Caco-2 (cell line): ENCODE measurements at regions of chr10 and their contacts with region 1.

Region 1: DNA sequence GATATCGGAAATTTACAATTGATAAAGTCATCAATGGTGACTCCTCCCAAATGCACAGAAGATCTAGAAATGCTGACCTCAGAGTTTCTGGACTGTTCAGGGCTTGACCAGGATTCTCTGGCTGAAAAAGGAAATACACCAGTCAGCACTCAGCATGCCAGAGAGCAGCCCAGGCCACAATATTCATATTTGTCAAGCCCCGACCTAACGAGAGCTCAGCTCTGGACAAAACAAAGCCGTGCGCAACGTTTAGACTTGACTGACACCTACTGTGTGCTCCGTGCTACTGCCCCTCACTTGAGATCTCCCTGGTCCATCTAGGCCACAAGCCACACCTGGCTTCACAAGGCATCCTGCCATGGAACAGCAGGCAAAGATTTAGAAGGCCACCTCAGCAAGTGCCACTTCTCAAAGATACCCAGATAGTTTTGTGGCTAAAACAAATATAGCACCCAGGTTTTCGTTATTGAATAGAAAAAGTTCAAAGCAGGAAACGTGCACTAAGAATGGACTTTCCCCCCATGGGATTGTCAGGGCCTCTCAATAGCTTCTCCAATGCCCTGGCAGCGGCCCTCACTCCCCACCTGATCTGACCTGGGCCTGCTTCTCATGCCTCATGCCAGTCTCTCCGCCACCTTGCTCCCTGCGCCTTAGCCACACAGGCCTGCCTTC is 218.3 kb downstream of the FAM107B start:
- DNase-seq: peak; percentile 76 to 79
- H3K4me3 ChIP-seq: no peak overlapping the region
- H3K4me3 Mint-ChIP-seq: peak overlapping the region; percentile 5
- H3K27ac Mint-ChIP-seq: peak overlapping the region; percentile 58
- H3K4me1 ChIP-seq: peaks cover 79% of the 10 kb centered on the region
- H3K4me1 Mint-ChIP-seq: peaks cover 75% of the 10 kb centered on the region
- H3K27me3 ChIP-seq: no peaks in the 10 kb centered on the region
- H3K27me3 Mint-ChIP-seq: no peaks in the 10 kb centered on the region
- CTCF ChIP-seq: peak; percentile 47 to 81

Region 2: GRCh38 chr10:14195433-14195832 is 361.0 kb before region 1 on chr10:
- CTCF ChIA-PET with region 1: interaction called, 6 read pairs
- POLR2A ChIA-PET with region 1: no interaction called
- intact Hi-C with region 1: loop called (anchors 5 kb)
- DNase-seq: no peak
- H3K4me3 ChIP-seq: no peak overlapping the region
- H3K4me3 Mint-ChIP-seq: no peak overlapping the region
- H3K27ac Mint-ChIP-seq: no peak overlapping the region
- H3K4me1 ChIP-seq: no peaks in the 10 kb centered on the region
- H3K4me1 Mint-ChIP-seq: peaks cover 9% of the 10 kb centered on the region
- H3K27me3 ChIP-seq: no peaks in the 10 kb centered on the region
- H3K27me3 Mint-ChIP-seq: no peaks in the 10 kb centered on the region
- CTCF ChIP-seq: no peak

Region 3: DNA sequence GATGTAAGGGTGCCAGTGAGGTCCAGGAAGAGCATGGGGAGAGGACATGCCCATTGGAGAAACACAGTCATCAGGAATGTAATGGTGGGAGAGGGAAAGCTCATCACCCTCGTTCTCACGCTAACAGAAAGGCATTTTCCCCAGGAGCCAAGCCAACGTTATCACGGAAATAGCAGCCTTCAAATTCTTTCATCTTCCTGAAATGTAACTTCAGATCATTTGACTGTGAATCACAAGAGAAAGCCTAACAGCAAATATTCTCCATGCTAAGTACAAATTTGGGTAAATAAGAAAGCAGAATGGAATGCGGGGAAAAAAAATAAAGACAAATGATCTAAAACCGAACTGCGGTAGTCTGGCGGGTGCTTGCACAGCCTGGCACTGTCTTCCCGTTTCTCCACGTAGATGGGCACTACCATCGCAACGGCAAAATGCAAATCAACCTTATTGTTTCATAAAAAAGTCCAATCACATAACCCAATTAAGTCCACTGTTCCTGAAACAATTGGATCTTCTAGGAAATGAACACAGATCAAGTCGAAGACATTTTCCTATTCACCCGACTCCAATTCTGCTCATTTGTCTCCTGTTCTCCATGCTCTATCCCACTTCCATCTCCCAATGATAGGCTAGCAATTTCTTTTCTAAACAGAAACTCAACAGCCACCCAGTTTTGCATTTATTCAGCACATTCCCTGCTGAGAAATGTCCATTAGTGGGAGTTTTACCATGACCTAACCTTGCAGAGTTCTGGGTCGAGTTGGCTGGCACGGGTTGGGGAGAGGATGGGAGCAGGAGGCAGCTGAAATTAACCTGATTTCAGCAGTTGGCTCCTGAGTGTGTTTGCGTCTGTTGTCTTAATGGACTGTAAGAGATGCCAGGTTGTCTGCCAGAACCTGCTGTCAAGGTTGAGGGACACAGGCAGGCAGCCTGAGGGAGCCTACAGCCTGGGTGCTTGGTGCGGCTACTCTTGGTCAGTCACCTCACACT is 151.1 kb before region 1 on chr10:
- CTCF ChIA-PET with region 1: no interaction called
- POLR2A ChIA-PET with region 1: no interaction called
- intact Hi-C with region 1: no loop called
- DNase-seq: no peak
- H3K4me3 ChIP-seq: no peak overlapping the region
- H3K4me3 Mint-ChIP-seq: no peak overlapping the region
- H3K27ac Mint-ChIP-seq: no peak overlapping the region
- H3K4me1 ChIP-seq: peaks cover 8% of the 10 kb centered on the region; the same call in 1 of the 2 replicates
- H3K4me1 Mint-ChIP-seq: peaks cover 11% of the 10 kb centered on the region
- H3K27me3 ChIP-seq: no peaks in the 10 kb centered on the region
- H3K27me3 Mint-ChIP-seq: peaks cover 2% of the 10 kb centered on the region
- CTCF ChIP-seq: no peak

Region 4: GRCh38 chr10:14499601-14499904 is 56.9 kb before region 1 on chr10:
- CTCF ChIA-PET with region 1: interaction called, 4 read pairs
- POLR2A ChIA-PET with region 1: no interaction called
- intact Hi-C with region 1: loop called (anchors 1 kb)
- DNase-seq: no peak
- H3K4me3 ChIP-seq: no peak overlapping the region
- H3K4me3 Mint-ChIP-seq: no peak overlapping the region
- H3K27ac Mint-ChIP-seq: no peak overlapping the region
- H3K4me1 ChIP-seq: no peaks in the 10 kb centered on the region; the same call in 1 of the 2 replicates
- H3K4me1 Mint-ChIP-seq: peaks cover 15% of the 10 kb centered on the region
- H3K27me3 ChIP-seq: no peaks in the 10 kb centered on the region
- H3K27me3 Mint-ChIP-seq: no peaks in the 10 kb centered on the region
- CTCF ChIP-seq: no peak

Region 5: DNA sequence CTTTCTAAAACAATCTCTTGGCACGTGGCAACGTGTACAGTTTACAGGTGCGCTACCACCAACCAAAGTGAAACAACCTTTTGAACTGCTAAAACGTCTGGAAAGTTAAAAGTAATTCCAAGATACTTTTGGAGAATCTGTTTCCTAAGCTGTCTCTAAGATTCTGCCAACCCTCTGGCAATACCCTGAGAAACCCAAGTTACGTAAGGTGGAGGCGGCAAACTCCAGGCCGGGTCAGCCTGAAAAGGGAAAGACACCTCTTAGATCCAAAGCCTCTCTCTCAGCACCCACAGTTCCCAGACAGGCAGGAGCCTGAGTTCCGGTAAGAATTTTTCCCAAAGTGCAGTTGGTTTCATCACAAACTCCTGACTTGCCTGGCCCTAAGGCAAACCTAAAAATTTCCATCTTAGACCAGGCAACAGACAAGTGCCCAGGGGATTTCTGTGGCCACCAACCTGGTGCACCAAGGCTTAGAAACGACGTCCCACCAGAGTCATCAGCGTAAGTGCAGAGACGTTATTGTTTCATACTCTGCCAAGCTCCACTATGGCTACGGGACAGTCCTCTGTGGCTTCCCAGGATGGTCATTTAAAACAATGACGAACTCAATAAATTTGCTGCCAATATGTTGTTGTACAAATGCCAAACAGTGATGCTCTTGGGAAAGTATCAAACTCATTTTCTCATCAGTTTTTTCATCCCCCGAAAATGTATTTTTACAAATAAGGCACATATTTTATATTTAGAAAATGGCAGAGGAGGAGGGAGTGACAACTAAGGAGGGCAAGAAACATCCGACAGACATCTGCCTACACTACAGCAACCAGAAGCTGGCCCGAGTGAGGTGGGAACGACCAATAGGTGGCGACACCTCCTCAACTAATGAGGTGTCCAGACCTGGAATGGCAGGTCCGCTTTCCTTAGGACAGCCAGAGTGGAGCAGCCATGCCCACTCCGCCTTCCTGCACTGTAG is 19.9 kb before region 1 on chr10:
- CTCF ChIA-PET with region 1: interaction called, 9 read pairs
- POLR2A ChIA-PET with region 1: interaction called, 3 read pairs
- intact Hi-C with region 1: loop called (anchors 1 kb)
- DNase-seq: peak; percentile 84 to 87
- H3K4me3 ChIP-seq: no peak overlapping the region
- H3K4me3 Mint-ChIP-seq: no peak overlapping the region
- H3K27ac Mint-ChIP-seq: no peak overlapping the region
- H3K4me1 ChIP-seq: peaks cover 55% of the 10 kb centered on the region
- H3K4me1 Mint-ChIP-seq: peaks cover 38% of the 10 kb centered on the region
- H3K27me3 ChIP-seq: no peaks in the 10 kb centered on the region
- H3K27me3 Mint-ChIP-seq: no peaks in the 10 kb centered on the region
- CTCF ChIP-seq: peak; percentile 70 to 73

Region 6: GRCh38 chr10:14543046-14543903 is 13.1 kb before region 1 on chr10:
- CTCF ChIA-PET with region 1: interaction called, 11 read pairs
- POLR2A ChIA-PET with region 1: interaction called, 4 read pairs
- intact Hi-C with region 1: loop called (anchors 1 kb)
- DNase-seq: no peak
- H3K4me3 ChIP-seq: no peak overlapping the region
- H3K4me3 Mint-ChIP-seq: no peak overlapping the region
- H3K27ac Mint-ChIP-seq: peak overlapping the region; percentile 59
- H3K4me1 ChIP-seq: peaks cover 42% of the 10 kb centered on the region
- H3K4me1 Mint-ChIP-seq: peaks cover 52% of the 10 kb centered on the region
- H3K27me3 ChIP-seq: no peaks in the 10 kb centered on the region
- H3K27me3 Mint-ChIP-seq: no peaks in the 10 kb centered on the region
- CTCF ChIP-seq: peak in 1 of 2 experiments; percentile 45

Region 7: DNA sequence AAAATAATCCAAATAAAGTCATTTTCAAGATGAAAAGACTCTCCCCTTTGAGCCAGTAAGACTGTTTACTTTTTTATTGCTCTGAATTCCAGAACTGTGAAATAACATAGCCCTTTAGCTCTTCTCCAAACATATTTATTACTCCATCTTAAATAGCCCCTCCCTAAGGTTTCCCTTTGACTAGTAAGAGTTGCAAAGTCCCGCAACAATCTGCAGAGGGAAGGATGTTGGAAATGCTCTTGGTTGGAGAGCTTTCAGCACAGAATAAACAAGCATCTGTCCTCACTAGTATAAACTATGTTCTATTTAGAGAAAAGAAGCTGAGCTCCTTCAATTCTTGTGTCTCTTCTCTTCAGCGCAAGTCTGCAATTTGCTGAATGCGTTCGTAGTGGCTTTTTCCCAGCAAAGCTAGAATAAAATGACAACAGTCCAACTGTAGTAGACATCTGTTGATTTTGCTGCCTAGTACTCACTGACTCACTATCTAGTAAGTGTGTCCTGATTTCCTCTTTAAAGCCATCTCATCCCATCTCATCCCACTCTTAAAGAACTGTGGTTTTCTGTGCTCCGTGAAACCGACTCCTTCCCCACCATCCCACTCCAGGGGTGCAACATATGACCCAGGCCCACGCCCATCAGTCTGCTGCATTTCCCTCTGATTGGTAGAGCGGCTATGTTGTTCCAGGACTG is 114.3 kb after region 1 on chr10:
- CTCF ChIA-PET with region 1: no interaction called
- POLR2A ChIA-PET with region 1: no interaction called
- intact Hi-C with region 1: loop called (anchors 5 kb)
- DNase-seq: peak in 1 of 2 experiments; percentile 60
- H3K4me3 ChIP-seq: no peak overlapping the region
- H3K4me3 Mint-ChIP-seq: peak overlapping the region; percentile 61
- H3K27ac Mint-ChIP-seq: peak overlapping the region; percentile 71
- H3K4me1 ChIP-seq: peaks cover 54% of the 10 kb centered on the region
- H3K4me1 Mint-ChIP-seq: peaks cover 43% of the 10 kb centered on the region
- H3K27me3 ChIP-seq: no peaks in the 10 kb centered on the region
- H3K27me3 Mint-ChIP-seq: no peaks in the 10 kb centered on the region
- CTCF ChIP-seq: no peak

Region 8: GRCh38 chr10:14681325-14681724 is 124.9 kb after region 1 on chr10:
- CTCF ChIA-PET with region 1: no interaction called
- POLR2A ChIA-PET with region 1: no interaction called
- intact Hi-C with region 1: no loop called
- DNase-seq: no peak
- H3K4me3 ChIP-seq: no peak overlapping the region
- H3K4me3 Mint-ChIP-seq: no peak overlapping the region
- H3K27ac Mint-ChIP-seq: no peak overlapping the region
- H3K4me1 ChIP-seq: peaks cover 2% of the 10 kb centered on the region
- H3K4me1 Mint-ChIP-seq: peaks cover 22% of the 10 kb centered on the region
- H3K27me3 ChIP-seq: no peaks in the 10 kb centered on the region
- H3K27me3 Mint-ChIP-seq: no peaks in the 10 kb centered on the region
- CTCF ChIP-seq: no peak

Region 9: DNA sequence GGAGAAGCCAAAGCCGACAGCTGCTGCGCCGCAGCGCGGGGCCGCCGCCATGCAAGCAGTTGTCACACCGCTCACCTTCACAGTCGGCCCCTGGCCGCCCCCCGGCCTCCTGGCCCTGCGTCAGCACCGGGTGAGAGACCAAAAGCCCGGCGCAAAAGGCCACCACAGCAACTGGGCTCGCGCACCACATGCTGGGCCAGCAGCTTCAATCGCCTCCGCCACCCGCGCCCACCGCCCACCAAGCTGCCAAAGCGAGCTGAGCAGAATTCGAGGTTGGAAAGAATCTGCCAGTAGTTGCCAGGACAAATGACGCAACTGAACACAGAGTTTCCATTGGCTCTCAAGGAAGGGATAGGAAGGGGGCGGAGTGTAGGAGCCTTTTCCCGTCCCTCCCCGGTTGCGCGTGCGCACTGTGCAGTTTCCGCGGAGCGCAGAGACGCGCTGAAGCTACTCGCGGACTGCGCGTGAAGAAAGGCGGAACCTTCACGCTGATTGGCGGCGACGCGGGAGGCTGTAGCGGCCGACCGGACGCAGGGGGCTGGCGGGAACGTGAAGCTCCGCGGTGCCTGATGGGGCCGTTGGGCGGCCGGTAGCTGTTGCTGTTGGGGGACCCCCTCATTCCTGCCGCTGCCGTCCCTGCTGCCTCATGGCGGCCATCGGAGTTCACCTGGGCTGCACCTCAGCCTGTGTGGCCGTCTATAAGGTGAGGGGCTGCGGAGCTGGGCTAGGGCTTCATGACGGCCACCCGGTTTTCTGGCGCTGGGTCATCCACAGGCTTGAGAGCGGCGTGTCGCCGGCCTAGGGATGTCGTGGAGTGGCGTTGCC is 281.5 kb after region 1 on chr10 and contains the starts of genes CDNF, HSPA14 and MSANTD7:
- CTCF ChIA-PET with region 1: interaction called, 4 read pairs
- POLR2A ChIA-PET with region 1: interaction called, 7 read pairs
- intact Hi-C with region 1: loop called (anchors 5 kb)
- DNase-seq: peak; percentile 100
- H3K4me3 ChIP-seq: peak within 1 kb of the TSS; percentile 91
- H3K4me3 Mint-ChIP-seq: peak within 1 kb of the TSS; percentile 70
- H3K27ac Mint-ChIP-seq: peak within 1 kb of the TSS; percentile 91
- H3K4me1 ChIP-seq: no peaks in the 10 kb centered on the region; the same call in 1 of the 2 replicates
- H3K4me1 Mint-ChIP-seq: peaks cover 15% of the 10 kb centered on the region
- H3K27me3 ChIP-seq: no peaks in the 10 kb centered on the region
- H3K27me3 Mint-ChIP-seq: no peaks in the 10 kb centered on the region
- CTCF ChIP-seq: no peak
- total RNA-seq, gene CDNF: 3.4 and 3.9 TPM in 2 replicates
- total RNA-seq, gene HSPA14: 36.9 and 39.3 TPM in 2 replicates
- total RNA-seq, gene MSANTD7: 30.0 and 32.8 TPM in 2 replicates